Posterior vena cava (tissue), 2 donors: ENCODE measurements at regions of chr4 and their contacts with region 1.

Region 1: GRCh38 chr4:948051-948935 is 16.0 kb downstream of the TMEM175 start:
- DNase-seq: peak; percentile 58

Region 2: DNA sequence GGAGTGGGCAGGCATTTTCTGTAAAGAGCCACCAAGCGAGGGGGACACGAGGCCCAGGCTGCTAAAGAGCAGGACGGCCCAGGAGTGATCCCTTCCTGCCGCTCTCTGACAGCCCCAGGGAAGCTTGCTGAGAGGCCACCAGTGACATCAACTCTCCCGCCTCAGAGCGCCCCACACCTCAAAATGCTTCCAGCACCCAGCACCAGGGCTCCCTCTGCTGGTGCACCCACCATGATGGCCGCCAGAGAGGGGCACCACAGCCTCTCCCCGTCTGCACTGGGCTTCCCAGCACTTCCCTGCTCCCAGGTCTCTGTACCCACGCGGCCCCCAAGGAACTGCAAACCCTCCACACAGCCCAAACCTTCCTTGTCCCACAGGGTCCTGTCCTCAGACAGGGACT is 56.5 kb before region 1 on chr4:
- intact Hi-C with region 1: loop called in 1 of 2 experiments (anchors 1 kb)
- DNase-seq: no peak

Region 3: GRCh38 chr4:924107-925096 is 23.9 kb before region 1 on chr4:
- intact Hi-C with region 1: no loop called
- DNase-seq: peak; percentile 72

Region 4: GRCh38 chr4:978957-979701 is 30.8 kb after region 1 on chr4:
- intact Hi-C with region 1: no loop called
- DNase-seq: no peak